AG04449 (cell line): ENCODE measurements at regions of chr22 and their contacts with region 1.

Region 1: GRCh38 chr22:27919222-27919941 is at the start of gene PITPNB:
- DNase-seq: peak; percentile 79
- H3K4me3 ChIP-seq: peak within 1 kb of the TSS; percentile 87
- CTCF ChIP-seq: no peak

Region 2: GRCh38 chr22:27930331-27931060 is 11.1 kb after region 1 on chr22:
- CTCF ChIA-PET with region 1: interaction called, 10 read pairs
- POLR2A ChIA-PET with region 1: interaction called, 8 read pairs
- DNase-seq: no peak
- H3K4me3 ChIP-seq: no peak overlapping the region
- CTCF ChIP-seq: no peak